Posterior cingulate gyrus (tissue), 11 donors: ENCODE measurements at regions of chr5 and their contacts with region 1.

Region 1: GRCh38 chr5:67209142-67209771 is 12.7 kb upstream of the CD180 start:
- DNase-seq: peak in 7 of 10 donors; percentile 39 to 86 (median 54)

Region 2: DNA sequence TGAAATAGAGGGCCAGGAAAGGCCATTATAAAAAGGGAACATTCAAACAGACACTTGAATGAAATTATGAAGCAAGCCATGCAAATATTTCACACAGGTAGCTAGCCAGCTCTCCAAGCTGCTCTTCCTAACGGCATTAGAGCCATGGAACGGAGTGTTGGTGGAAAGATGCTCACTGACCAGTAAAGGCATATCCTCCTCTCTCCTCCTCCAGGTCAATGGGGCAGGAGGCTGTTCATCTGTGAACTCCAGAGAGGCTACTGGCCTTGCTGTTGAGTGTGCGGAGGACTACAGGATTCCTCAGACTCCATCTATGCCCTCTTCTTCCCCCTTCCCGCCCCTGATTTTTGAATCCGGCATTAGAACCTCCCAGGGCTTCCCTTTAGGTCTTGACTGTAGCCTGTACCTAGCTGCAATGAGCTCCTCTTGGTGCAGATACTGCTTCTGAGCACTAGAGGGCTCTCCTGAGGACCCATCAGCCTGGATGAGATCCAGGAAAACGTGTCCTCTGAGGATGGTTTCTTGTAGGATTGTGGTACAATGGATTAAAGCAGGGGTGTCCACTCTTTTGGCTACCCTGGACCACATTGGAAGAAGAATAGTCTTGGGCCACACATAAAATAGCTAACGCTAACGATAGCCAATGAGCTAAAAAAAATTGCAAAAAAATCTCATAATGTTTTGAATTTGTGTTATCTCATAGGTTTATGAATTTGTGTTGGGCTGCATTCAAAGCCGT is 903.0 kb before region 1 on chr5:
- intact Hi-C with region 1: loop called (anchors 5 kb)
- DNase-seq: peak in 5 of 10 donors; percentile 40 to 92 (median 45)

Region 3: GRCh38 chr5:66742083-66742895 is 467.0 kb before region 1 on chr5:
- intact Hi-C with region 1: no loop called
- DNase-seq: peak in 7 of 10 donors; percentile 22 to 88 (median 57)

Region 4: DNA sequence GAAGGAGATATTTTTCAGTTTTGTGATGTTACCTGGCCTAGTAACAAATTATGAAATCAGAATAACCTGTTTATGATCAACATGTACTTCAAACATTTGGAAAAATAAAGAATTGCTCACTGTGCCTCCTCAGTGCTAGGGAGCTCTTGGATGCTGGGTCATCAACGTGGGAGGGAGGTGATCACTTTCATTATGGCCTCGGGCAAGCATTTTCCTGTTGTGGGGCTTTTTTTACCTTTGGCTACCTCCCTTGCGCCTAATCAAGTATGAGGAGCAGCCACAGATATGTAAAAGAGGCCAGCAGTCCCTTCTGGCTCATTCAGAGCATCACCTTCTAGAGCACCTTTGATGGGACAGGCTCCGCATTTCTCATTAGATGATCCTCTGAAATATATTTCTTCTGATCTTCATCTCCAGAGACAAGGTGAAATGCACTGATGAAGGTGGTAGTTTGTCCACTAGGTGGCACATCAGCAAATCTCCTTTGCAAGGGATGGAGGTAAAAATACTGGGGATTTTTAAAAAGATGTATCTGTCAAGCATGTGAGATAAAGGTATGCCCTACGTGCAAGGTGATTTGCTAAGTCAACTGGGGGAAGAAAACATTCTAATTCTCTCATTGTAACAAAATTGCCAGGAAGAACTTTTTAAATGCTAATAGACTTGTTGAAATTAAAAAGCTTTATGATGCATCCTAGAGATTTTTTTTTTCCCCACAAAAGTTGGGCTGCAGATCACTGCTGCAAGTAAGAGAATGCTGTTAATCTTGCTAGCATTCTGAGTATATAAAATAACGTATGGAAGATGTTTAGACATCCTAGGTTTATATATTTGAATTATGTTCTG is 394.9 kb before region 1 on chr5:
- intact Hi-C with region 1: loop called (anchors 2 kb)
- DNase-seq: peak in 3 of 10 donors; percentile 29 to 44 (median 34)

Region 5: DNA sequence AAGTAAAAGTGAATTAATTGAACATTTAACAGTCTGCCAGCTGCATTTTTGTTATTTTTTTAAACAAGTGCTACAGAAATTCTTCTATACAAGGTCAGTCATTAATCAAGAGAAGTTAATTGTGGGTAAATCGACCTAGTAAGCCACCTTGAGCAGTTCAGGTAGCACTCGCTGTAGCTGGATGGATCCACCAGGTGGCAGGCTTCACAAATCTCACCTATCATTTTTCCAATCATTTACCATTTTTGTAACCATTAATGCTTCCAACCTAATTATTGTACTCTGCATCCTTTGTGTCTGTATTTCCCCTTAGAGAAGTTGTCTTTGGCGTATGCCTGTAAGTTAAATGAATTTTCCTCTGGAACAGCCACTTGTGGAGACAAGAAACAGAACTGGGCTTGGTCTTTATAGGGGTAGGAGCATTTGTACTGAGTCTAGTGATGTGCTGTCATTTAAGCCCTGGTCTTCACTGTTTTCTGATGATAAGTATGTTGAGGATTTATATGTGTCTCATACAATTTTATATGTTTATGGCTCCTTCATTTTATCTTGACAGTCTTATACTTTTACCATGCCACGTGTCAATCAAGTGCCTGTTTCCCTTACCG is 52.2 kb before region 1 on chr5:
- intact Hi-C with region 1: loop called (anchors 2 kb)
- DNase-seq: peak in 3 of 10 donors; percentile 43 to 81 (median 67)

Region 6: DNA sequence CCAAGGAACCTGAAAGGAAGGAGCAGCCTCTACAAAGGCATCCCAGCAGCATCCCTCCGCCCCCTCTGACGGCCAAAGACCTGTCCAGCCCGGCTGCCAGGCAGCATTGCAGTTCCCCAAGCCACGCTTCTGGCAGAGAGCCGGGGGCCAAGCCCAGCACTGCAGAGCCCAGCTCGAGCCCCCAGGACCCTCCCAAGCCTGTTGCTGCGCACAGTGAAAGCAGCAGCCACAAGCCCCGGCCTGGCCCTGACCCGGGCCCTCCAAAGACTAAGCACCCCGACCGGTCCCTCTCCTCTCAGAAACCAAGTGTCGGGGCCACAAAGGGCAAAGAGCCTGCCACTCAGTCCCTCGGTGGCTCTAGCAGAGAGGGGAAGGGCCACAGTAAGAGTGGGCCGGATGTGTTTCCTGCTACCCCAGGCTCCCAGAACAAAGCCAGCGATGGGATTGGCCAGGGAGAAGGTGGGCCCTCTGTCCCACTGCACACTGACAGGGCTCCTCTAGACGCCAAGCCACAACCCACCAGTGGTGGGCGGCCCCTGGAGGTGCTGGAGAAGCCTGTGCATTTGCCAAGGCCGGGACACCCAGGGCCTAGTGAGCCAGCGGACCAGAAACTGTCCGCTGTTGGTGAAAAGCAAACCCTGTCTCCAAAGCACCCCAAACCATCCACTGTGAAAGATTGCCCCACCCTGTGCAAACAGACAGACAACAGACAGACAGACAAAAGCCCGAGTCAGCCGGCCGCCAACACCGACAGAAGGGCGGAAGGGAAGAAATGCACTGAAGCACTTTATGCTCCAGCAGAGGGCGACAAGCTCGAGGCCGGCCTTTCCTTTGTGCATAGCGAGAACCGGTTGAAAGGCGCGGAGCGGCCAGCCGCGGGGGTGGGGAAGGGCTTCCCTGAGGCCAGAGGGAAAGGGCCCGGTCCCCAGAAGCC is 43.5 kb before region 1 on chr5:
- intact Hi-C with region 1: loop called (anchors 2 kb)
- DNase-seq: peak; percentile 60 to 96 (median 78)